Naive thymus-derived CD4-positive, alpha-beta T cell (primary cell): ENCODE measurements at regions of chr9 and their contacts with region 1.

Region 1: GRCh38 chr9:131407717-131408195 is 13.9 kb downstream of the PRRC2B start:
- DNase-seq: peak in 7 of 9 donors; percentile 48 to 71 (median 60)
- ATAC-seq: peak; percentile 76
- H3K4me3 ChIP-seq: peak overlapping the region; percentile 54
- H3K4me3 Mint-ChIP-seq: peak overlapping the region; percentile 80 to 93 (median 85)
- H3K27ac ChIP-seq: peak overlapping the region; percentile 64
- H3K27ac Mint-ChIP-seq: peak overlapping the region; percentile 81 to 93 (median 86)
- H3K4me1 ChIP-seq: peaks cover 79 to 88% of the 10 kb centered on the region in 2 donors
- H3K4me1 Mint-ChIP-seq: peaks cover 78 to 99% (median 88%) of the 10 kb centered on the region in 7 donors
- H3K27me3 ChIP-seq: no peaks in the 10 kb centered on the region
- H3K27me3 Mint-ChIP-seq: no peaks in the 10 kb centered on the region

Region 2: DNA sequence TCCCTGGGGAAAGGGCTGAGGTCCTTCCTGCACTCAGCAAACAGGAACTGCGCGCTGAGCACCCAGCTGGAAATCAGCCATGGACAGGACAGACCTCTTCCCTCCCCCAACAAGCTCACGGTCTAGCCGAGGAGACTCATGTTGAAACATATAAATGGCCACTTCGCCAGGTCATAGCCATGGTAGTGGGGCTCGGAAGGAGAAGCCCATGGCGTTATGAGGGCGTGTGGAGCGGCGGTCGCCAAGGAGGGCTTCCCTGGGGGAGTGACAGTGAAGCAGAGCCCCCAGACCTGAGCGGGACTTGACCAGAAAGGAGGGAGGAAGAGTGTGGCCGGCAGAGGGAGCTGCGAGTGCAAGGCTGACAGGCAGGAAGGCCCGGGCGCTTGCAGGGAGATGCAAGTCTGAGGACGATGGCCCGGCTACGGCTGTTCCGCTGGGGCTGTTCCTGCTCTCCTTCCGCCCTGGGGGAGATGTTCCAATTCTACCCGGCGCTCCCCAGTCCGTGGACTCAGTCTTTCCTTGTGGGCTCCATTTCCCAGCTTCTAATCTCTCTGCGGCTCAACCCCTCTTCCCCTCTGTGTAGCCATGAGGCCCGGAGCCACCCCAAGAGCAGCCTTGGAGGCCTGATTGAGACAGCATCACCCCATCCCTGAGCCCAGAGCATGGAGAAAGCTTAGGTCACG is 57.7 kb before region 1 on chr9:
- CTCF ChIA-PET with region 1: interaction called, 30 read pairs
- POLR2A ChIA-PET with region 1: interaction called, 8 read pairs
- intact Hi-C with region 1: loop called (anchors 1 kb)
- DNase-seq: peak; percentile 74 to 87 (median 82)
- ATAC-seq: peak; percentile 99
- H3K4me3 ChIP-seq: no peak overlapping the region
- H3K4me3 Mint-ChIP-seq: peak overlapping the region in 8 of 10 donors; percentile 12 to 80 (median 57)
- H3K27ac ChIP-seq: no peak overlapping the region
- H3K27ac Mint-ChIP-seq: peak overlapping the region in 5 of 9 donors; percentile 65 to 78 (median 70)
- H3K4me1 ChIP-seq: peaks cover 4 to 9% of the 10 kb centered on the region in 2 donors
- H3K4me1 Mint-ChIP-seq: peaks cover 0 to 15% (median 8%) of the 10 kb centered on the region in 7 donors
- H3K27me3 ChIP-seq: no peaks in the 10 kb centered on the region
- H3K27me3 Mint-ChIP-seq: peaks cover 0 to 5% (median 0%) of the 10 kb centered on the region in 5 donors

Region 3: DNA sequence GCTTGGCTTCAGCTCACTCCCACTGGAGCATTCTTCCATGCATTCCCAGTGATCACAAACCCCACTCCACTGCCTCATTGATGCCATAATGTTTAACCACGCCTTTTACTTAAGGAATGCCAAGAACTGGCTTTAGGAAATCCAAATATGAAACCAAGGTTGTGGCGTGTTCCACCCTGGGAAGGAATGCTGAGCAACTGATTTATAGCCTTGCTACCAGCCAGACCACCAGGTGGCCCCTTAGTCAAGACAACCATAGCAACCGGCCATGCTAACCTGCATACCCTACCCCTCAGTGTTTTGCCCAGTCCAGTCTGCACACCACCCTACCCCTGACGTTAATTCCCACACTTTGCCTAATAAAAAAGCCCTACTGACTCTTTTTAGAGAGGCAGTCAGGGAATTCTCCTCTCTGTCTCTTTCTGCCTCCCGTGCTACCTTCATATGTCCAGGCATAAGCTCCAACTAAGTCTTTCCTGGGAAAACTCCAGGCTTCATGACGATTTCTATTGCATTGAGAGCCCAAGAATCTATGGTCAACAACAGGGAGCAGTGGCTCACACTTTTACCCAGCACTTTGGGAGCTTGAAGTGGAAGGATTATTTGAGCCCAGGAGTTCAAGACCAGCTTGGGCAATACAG is 40.9 kb before region 1 on chr9:
- CTCF ChIA-PET with region 1: interaction called, 18 read pairs
- POLR2A ChIA-PET with region 1: interaction called, 34 read pairs
- intact Hi-C with region 1: loop called (anchors 5 kb)
- DNase-seq: no peak
- ATAC-seq: no peak
- H3K4me3 ChIP-seq: no peak overlapping the region
- H3K4me3 Mint-ChIP-seq: no peak overlapping the region
- H3K27ac ChIP-seq: no peak overlapping the region
- H3K27ac Mint-ChIP-seq: peak overlapping the region in 1 of 9 donors; percentile 31
- H3K4me1 ChIP-seq: peaks cover 0 to under 1% of the 10 kb centered on the region in 2 donors
- H3K4me1 Mint-ChIP-seq: peaks cover 1 to 43% (median 19%) of the 10 kb centered on the region in 7 donors
- H3K27me3 ChIP-seq: no peaks in the 10 kb centered on the region
- H3K27me3 Mint-ChIP-seq: no peaks in the 10 kb centered on the region

Region 4: DNA sequence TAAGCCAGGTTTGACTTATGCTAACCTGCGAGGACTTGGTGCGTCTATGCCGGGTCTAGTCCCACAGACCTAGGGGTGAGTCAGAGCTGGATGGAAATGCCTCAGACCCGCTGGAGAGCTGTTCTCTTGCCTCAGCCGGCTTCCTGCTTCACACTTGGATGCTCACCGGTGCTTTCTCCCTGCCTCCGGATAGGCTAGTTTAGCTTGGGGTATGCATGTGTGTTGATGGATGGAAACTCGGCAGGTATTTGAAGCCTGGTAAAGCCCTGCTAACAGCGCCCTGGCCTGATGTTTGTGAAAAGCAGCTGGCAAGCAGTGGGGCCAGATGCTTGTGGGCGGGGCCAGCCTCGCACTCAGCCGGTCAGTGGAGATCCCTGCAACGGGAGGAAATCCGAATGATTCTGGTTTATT is 15.4 kb after region 1 on chr9:
- CTCF ChIA-PET with region 1: interaction called, 4 read pairs
- POLR2A ChIA-PET with region 1: interaction called, 15 read pairs
- intact Hi-C with region 1: loop called in 1 of 2 experiments (anchors 2 kb)
- DNase-seq: no peak
- ATAC-seq: peak; percentile 26
- H3K4me3 ChIP-seq: no peak overlapping the region
- H3K4me3 Mint-ChIP-seq: peak overlapping the region in 7 of 10 donors; percentile 40 to 66 (median 59)
- H3K27ac ChIP-seq: no peak overlapping the region
- H3K27ac Mint-ChIP-seq: peak overlapping the region in 7 of 9 donors; percentile 9 to 87 (median 60)
- H3K4me1 ChIP-seq: peaks cover 25 to 46% of the 10 kb centered on the region in 2 donors
- H3K4me1 Mint-ChIP-seq: peaks cover 54 to 97% (median 73%) of the 10 kb centered on the region in 7 donors
- H3K27me3 ChIP-seq: no peaks in the 10 kb centered on the region
- H3K27me3 Mint-ChIP-seq: no peaks in the 10 kb centered on the region

Region 5: DNA sequence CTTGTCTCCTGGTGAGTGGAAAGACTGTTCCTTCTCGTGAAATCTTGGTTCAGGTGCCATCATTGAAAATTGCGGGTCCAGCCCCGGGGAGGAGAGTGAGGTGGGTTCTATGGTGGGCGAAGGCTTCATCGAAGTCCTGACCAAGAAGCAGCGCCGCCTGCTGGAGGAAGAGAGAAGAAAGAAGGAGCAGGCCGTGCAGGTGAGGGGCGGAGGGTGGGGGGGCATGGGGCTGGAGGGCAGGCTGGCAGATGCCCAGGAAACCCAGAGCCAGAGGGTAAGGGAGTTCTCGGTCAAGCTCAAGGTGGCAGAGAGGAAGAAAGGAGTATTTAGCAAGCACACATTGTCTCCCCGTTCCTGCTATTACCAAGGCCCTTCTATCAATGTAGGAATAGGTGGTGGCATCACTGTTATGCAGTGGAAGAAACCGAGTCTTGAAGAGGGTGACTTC is 70.7 kb after region 1 on chr9:
- CTCF ChIA-PET with region 1: interaction called, 3 read pairs
- POLR2A ChIA-PET with region 1: interaction called, 3 read pairs
- intact Hi-C with region 1: loop called in 1 of 2 experiments (anchors 1 kb)
- DNase-seq: peak; percentile 19 to 65 (median 51)
- ATAC-seq: peak; percentile 61
- H3K4me3 ChIP-seq: no peak overlapping the region
- H3K4me3 Mint-ChIP-seq: no peak overlapping the region
- H3K27ac ChIP-seq: no peak overlapping the region
- H3K27ac Mint-ChIP-seq: peak overlapping the region in 6 of 9 donors; percentile 11 to 87 (median 64)
- H3K4me1 ChIP-seq: no peaks in the 10 kb centered on the region
- H3K4me1 Mint-ChIP-seq: peaks cover 0 to 8% (median 3%) of the 10 kb centered on the region in 7 donors
- H3K27me3 ChIP-seq: no peaks in the 10 kb centered on the region
- H3K27me3 Mint-ChIP-seq: no peaks in the 10 kb centered on the region